GM12878 (cell line): ENCODE measurements at regions of chr1 and their contacts with region 1.

Region 1: DNA sequence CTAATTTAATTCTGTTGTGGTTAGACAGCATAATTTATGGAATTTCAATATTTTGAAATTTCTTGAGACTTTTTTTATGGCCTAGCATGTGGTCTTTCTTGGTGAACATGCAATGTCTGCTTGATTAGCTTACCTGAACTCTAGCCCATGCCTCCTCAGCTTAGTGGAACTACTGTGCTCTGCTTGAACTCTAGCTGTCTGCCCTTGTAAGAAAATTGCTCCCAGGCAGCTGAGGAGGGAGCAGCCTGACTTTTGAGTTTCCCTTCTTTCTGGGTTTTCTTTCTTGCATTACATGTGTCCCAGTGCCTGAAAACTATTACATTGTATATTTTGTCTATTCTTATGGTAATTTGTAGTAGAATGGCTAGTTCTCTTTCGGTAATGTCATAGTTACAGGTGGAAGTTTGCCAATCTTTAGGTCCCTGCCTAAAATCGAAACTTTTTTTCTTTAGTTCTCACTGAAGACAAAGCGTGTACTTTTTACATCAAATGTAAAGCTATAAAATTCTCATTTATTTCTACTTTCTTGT is 105.3 kb downstream of the MAST2 start:
- DNase-seq: no peak
- ATAC-seq: no peak
- H3K4me3 ChIP-seq: no peak overlapping the region
- H3K27ac ChIP-seq: no peak overlapping the region
- H3K4me1 ChIP-seq: peaks cover 2% of the 10 kb centered on the region; the same call in 1 of the 2 replicates
- H3K27me3 ChIP-seq: no peaks in the 10 kb centered on the region
- CTCF ChIP-seq: no peak
- EP300 ChIP-seq: no peak
- POLR2A ChIP-seq: no peak
- RAD21 ChIP-seq: no peak

Region 2: DNA sequence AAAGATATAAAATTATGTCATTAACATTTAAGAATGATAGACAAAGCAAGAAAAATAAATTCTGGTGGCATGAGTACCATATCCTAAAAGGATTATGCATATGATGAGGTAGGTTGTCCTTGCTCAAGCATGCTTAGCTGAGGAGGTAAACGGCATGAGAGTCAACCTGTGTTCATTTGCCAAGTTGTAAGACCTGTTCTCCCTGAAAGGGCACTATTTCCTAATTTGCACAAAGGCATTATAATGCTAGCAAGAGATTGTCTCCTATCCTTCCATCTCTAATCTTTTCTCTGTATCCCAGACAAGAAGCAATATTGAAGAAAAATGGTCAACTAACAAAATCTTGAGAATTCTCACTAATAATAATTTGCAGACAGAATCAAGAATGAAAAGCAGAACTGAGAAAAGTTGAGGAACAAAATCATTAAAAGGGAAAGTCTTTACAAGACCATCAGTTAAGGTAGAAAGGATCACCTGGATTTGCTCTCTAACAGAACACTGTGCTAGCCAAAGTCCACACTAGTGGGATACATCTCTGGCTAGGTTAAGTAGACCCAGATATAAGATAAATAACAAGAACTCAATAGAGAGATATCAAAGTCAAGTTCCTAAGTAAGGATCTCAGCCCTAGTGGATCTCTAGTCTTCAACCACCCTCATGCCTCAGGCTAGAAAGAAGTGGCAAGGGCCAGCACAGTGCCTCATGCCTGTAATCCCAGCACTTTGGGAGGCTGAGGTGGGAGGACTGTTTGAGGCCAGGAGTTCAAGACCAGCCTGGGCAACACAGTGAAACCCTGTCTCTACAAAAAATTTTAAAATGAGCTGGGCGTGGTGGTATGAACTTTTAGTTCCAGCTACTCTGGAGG is 178.0 kb before region 1 on chr1:
- CTCF ChIA-PET with region 1: no interaction called
- POLR2A ChIA-PET with region 1: no interaction called
- RAD21 ChIA-PET with region 1: no interaction called
- SMC1A ChIA-PET with region 1: no interaction called
- in situ Hi-C with region 1: no loop called
- intact Hi-C with region 1: no loop called
- DNase-seq: no peak
- ATAC-seq: peak; percentile 76
- H3K4me3 ChIP-seq: no peak overlapping the region
- H3K27ac ChIP-seq: no peak overlapping the region; the same call in 1 of the 2 replicates
- H3K4me1 ChIP-seq: peaks cover 9% of the 10 kb centered on the region
- H3K27me3 ChIP-seq: no peaks in the 10 kb centered on the region
- CTCF ChIP-seq: no peak
- EP300 ChIP-seq: no peak
- POLR2A ChIP-seq: no peak
- RAD21 ChIP-seq: no peak

Region 3: GRCh38 chr1:45892068-45892785 is 16.4 kb before region 1 on chr1:
- CTCF ChIA-PET with region 1: interaction called, 4 read pairs
- POLR2A ChIA-PET with region 1: no interaction called
- RAD21 ChIA-PET with region 1: no interaction called
- SMC1A ChIA-PET with region 1: interaction called, 10 read pairs
- in situ Hi-C with region 1: no loop called
- intact Hi-C with region 1: no loop called
- DNase-seq: no peak
- ATAC-seq: no peak
- H3K4me3 ChIP-seq: no peak overlapping the region
- H3K27ac ChIP-seq: no peak overlapping the region
- H3K4me1 ChIP-seq: no peaks in the 10 kb centered on the region
- H3K27me3 ChIP-seq: no peaks in the 10 kb centered on the region
- CTCF ChIP-seq: no peak
- EP300 ChIP-seq: no peak
- POLR2A ChIP-seq: no peak
- RAD21 ChIP-seq: no peak

Region 4: DNA sequence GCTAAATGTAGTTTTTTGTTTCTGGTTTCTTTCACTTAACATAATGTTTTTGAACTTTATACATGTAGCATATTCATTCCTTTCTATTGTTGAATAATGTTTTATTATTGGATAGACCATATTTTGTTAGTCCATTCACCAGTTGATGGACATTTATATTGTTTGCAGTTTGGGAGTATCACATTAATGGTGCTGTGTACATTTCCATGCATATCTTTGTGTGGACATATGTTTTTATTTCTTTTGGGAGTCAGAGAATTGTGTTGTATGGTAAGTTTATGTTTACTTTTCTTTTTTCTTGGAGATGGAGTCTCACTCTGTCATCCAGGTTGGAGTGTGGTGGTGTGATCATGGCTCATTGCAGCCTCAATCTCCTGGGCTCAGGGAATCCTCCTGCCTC is 29.4 kb after region 1 on chr1:
- CTCF ChIA-PET with region 1: no interaction called
- POLR2A ChIA-PET with region 1: no interaction called
- RAD21 ChIA-PET with region 1: no interaction called
- SMC1A ChIA-PET with region 1: no interaction called
- in situ Hi-C with region 1: no loop called
- intact Hi-C with region 1: no loop called
- DNase-seq: no peak
- ATAC-seq: no peak
- H3K4me3 ChIP-seq: no peak overlapping the region
- H3K27ac ChIP-seq: no peak overlapping the region
- H3K4me1 ChIP-seq: peaks cover 6% of the 10 kb centered on the region
- H3K27me3 ChIP-seq: no peaks in the 10 kb centered on the region
- CTCF ChIP-seq: no peak
- EP300 ChIP-seq: no peak
- POLR2A ChIP-seq: no peak
- RAD21 ChIP-seq: no peak